ENCODE measurements at regions of chr6 and their contacts with region 1.

Region 1: GRCh38 chr6:109009236-109009961 is 85.2 kb downstream of the SESN1 start:
- DNase-seq: peak; percentile 87
- H3K4me3 Mint-ChIP-seq: peak overlapping the region; percentile 92
- H3K27ac Mint-ChIP-seq: peak overlapping the region; percentile 84
- H3K4me1 Mint-ChIP-seq: peaks cover 31% of the 10 kb centered on the region
- H3K27me3 Mint-ChIP-seq: no peaks in the 10 kb centered on the region

Region 2: GRCh38 chr6:107957909-107958688 is 1051.3 kb before region 1 on chr6 and contains the start of gene SEC63:
- intact Hi-C with region 1: loop called (anchors 2 kb)
- DNase-seq: peak; percentile 97
- H3K4me3 Mint-ChIP-seq: peak within 1 kb of the TSS; percentile 100
- H3K27ac Mint-ChIP-seq: peak within 1 kb of the TSS; percentile 99
- H3K4me1 Mint-ChIP-seq: peaks cover 14% of the 10 kb centered on the region
- H3K27me3 Mint-ChIP-seq: peaks cover 5% of the 10 kb centered on the region
- total RNA-seq, gene SEC63: 87.1 and 90.7 TPM in 2 replicates

Region 3: GRCh38 chr6:108874470-108875160 is 134.8 kb before region 1 on chr6:
- intact Hi-C with region 1: loop called (anchors 1 kb)
- DNase-seq: peak; percentile 51
- H3K4me3 Mint-ChIP-seq: peak overlapping the region; percentile 34
- H3K27ac Mint-ChIP-seq: peak overlapping the region; percentile 96
- H3K4me1 Mint-ChIP-seq: peaks cover 80% of the 10 kb centered on the region
- H3K27me3 Mint-ChIP-seq: peaks cover 4% of the 10 kb centered on the region

Region 4: DNA sequence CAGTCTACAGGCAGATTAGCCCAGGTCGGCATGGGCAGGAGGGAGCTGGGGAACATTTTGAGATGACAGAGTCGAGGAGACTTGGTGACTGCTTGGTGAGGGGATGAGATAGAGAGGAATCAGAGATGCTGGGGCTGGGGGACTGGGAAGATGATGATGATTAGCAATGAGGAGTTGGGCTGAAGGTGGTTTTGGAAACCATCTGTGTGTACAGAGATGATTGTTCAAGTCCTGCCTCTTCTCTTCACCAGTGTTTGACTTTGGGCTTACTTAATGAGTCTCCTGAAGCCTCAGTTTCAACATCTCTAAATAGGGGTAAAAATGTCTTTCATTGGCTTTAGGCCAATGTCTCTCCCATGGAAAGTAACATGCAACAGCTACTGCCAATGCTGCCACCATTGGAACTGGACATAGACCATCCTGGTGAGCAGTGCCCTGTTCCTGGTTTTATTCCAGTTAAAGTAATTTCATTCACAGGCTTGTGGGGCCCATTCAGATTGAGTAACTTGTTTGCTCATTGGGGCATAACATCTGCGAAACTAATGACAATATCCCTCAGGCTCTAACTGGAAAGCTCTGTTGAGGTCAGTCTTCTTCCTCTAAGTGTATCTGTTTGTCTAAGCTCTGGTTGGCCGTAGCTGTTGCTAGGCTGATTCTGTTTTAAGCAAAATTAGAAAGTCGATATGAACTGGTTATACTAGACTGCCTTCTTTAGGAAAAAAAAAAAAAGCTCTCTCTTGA is 62.1 kb before region 1 on chr6:
- intact Hi-C with region 1: loop called (anchors 1 kb)
- DNase-seq: no peak
- H3K4me3 Mint-ChIP-seq: peak overlapping the region; percentile 53
- H3K27ac Mint-ChIP-seq: peak overlapping the region; percentile 91
- H3K4me1 Mint-ChIP-seq: peaks cover 54% of the 10 kb centered on the region
- H3K27me3 Mint-ChIP-seq: peaks cover 7% of the 10 kb centered on the region

Region 5: DNA sequence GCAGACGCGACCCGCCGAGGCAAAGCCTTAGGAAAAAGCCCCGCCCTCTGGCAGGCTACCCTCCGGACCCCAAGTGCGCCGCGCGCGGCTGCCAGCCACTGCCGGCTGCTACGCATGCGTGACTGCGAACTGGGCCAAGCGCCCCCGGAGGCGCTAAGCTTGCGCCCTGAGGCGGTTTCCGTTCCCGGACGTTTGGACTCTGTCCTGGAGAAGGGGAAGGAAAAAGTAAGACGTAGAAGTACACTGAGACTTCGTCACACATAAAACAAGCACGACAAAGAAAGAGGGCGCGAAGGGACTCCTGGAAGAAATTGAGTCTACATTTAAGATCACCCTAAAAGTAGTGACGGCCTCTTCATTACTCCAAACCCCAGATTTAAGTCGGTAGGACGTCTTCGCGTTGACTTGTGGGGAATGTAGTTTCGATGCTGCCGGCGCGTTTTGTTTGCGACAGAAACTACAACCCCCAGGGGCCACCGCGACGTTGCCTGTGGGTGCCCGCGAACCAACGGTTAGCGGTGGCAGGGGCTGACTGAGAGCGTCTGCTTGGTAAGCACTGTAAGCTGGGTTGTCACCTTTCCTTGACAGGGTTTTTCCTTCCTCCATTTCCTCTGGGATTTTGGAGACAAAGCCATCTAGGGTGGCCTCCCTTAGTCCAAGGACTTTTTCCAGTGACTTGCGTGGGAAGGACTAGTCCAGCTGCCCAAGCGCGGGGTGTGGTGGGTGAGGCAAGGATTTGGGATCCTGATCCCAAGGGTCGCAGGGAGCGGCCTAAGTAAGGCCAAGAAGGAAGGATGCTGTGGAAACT is 85.8 kb after region 1 on chr6 and contains the start of gene CEP57L1:
- intact Hi-C with region 1: loop called (anchors 1 kb)
- DNase-seq: peak; percentile 91
- H3K4me3 Mint-ChIP-seq: peak within 1 kb of the TSS; percentile 95
- H3K27ac Mint-ChIP-seq: peak within 1 kb of the TSS; percentile 97
- H3K4me1 Mint-ChIP-seq: peaks cover 54% of the 10 kb centered on the region
- H3K27me3 Mint-ChIP-seq: no peaks in the 10 kb centered on the region
- total RNA-seq, gene CEP57L1: 13.5 and 16.3 TPM in 2 replicates

Region 6: DNA sequence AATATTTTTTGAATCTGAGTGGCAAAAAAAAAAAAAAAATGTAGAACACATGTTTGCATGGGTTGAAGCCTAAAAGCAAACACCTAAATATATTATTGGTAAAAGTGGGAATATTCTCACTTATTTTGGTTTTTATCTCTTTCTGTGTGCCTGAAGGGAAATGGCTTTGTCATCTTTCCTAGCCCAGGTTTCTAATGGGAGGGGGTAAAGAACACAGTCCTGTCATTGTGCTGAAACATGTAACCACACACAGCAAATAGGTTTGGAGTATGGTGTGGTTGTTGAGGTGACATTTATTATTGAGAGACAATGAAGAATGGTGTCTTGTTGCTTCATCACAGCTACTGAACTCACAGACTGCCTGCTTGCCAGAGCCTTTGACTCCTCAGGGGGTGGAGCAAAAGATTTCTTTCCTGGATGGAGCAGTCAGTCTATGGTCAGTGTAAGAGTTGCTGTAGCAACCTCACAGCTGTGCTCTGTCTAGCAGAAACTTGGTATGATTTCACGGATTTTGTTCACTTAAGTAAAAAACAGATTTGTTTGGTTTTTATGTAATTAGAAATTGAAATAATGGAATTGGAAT is 156.1 kb after region 1 on chr6:
- intact Hi-C with region 1: no loop called
- DNase-seq: no peak
- H3K4me3 Mint-ChIP-seq: no peak overlapping the region
- H3K27ac Mint-ChIP-seq: no peak overlapping the region
- H3K4me1 Mint-ChIP-seq: no peaks in the 10 kb centered on the region
- H3K27me3 Mint-ChIP-seq: no peaks in the 10 kb centered on the region

Region 7: DNA sequence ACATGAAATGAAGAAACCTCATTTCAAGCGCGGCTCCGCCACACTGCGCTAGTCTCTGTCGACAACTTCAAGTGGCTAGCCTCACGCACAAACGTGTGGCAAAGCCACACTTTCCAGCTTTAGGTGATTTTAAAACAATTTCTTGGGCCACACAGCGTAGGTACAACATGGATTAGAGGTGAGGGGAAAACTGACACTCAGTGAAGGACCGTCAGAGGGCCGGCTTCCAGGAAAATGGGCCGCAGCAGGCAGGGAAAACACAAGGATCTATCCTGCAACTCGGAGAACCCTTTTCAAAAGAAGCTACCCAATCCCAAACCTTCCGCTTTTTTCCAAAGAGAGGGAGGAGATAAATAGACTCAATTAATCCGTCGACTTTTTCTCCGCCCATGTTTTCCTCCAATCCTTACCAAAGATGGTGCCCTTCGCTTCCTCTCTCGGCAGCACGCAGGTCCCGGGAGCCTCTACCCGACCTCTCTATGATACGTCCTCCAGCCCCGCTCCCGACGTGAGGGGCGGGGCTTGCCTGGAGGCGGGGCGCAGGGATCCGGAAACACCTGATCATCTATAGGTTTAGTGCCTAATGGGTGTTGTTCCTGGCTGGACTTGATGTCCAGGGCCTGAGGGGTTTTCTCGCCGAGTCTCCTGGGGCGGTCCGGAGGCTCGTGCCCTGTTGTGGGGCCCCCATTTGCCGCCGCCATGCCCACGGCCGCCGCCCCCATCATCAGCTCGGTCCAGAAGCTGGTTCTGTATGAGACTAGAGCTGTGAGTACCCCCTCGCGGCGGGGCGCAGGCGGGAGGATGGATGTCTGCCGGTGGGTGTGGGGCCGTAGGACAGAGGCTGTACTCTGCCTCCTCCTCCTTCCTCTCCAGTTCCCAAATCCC is 681.6 kb after region 1 on chr6 and contains the starts of genes AK9 and FIG4:
- intact Hi-C with region 1: loop called (anchors 5 kb)
- DNase-seq: peak; percentile 85
- H3K4me3 Mint-ChIP-seq: peak within 1 kb of the TSS; percentile 87
- H3K27ac Mint-ChIP-seq: peak within 1 kb of the TSS; percentile 84
- H3K4me1 Mint-ChIP-seq: peaks cover 47% of the 10 kb centered on the region
- H3K27me3 Mint-ChIP-seq: peaks cover 13% of the 10 kb centered on the region
- total RNA-seq, gene AK9: 2.8 and 3.8 TPM in 2 replicates
- total RNA-seq, gene FIG4: 7.5 and 8.1 TPM in 2 replicates

Region 8: DNA sequence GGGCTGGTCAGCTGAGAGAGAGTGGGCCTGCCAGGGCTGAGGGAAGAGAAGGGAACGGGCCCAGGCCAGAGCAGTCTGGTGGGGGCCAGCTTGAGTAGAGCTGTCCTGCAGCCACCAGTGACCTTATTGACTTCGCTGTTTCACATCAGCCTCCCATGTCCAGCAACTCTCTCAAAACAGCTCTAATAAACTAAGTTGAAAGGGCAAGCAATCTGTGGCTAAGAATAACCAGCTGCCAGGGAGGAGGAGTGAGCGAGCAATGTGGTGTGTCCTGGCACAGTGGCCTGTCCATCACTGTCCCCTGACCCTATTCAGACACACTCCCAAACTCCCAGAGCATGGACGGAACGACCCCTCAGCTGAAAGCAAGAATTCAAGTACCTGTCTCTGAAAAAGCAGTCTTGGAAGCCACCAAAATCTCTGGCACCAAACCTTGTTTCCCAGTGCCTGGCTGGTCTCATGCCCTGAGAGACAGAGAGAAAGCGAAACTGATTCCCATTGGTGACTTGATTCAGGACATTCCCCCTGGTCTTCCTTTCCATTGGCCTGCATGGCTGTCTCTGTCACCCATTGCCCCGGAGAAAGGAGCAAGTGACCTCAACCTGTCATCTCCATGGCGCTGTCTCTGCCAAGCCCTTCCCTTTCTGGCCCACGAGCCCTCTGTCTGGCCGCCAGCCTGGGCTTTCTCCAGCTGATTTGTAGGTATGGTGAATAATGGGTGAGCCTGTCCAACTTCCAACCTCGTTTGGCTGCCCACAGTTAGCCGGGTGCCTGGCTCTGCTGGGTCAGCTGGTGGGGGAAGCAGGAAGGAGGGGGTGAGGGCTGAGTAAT is 1405.9 kb after region 1 on chr6 and contains the start of gene DDO:
- intact Hi-C with region 1: no loop called
- DNase-seq: no peak
- H3K4me3 Mint-ChIP-seq: peak within 1 kb of the TSS; percentile 27
- H3K27ac Mint-ChIP-seq: no peak within 1 kb of the TSS
- H3K4me1 Mint-ChIP-seq: peaks cover 7% of the 10 kb centered on the region
- H3K27me3 Mint-ChIP-seq: peaks cover 4% of the 10 kb centered on the region
- total RNA-seq, gene DDO: not detected in 2 replicates